ENCODE measurements at regions of chr9 and their contacts with region 1.

Region 1: GRCh38 chr9:22158927-22159346 is 149.8 kb upstream of the CDKN2B start:
- DNase-seq: peak; percentile 61
- H3K4me3 Mint-ChIP-seq: no peak overlapping the region
- H3K27ac Mint-ChIP-seq: peak overlapping the region; percentile 86
- H3K4me1 Mint-ChIP-seq: peaks cover 31% of the 10 kb centered on the region
- H3K27me3 Mint-ChIP-seq: no peaks in the 10 kb centered on the region
- CTCF ChIP-seq: no peak

Region 2: GRCh38 chr9:22211593-22212360 is 52.8 kb after region 1 on chr9:
- CTCF ChIA-PET with region 1: interaction called, 4 read pairs
- intact Hi-C with region 1: loop called (anchors 5 kb)
- DNase-seq: peak; percentile 54
- H3K4me3 Mint-ChIP-seq: no peak overlapping the region
- H3K27ac Mint-ChIP-seq: peak overlapping the region; percentile 90
- H3K4me1 Mint-ChIP-seq: peaks cover 37% of the 10 kb centered on the region
- H3K27me3 Mint-ChIP-seq: no peaks in the 10 kb centered on the region
- CTCF ChIP-seq: no peak

Region 3: DNA sequence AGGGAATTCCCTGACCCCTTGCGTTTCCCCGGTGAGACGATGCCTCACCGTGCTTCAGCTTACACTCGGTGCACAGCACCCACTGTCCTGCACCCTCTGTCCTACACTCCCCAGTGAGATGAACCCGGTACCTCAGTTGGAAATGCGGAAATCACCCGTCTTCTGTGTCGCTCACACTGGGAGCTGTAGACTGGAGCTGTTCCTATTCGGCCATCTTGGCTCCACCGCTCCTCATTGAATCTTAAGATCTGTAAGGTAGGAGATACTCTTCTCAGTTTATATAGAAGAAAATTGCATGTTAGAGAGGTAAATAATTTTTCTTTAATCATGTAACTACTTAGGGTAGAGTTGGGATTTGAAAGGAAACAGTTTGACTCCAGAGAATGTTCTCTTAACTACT is 349.9 kb after region 1 on chr9:
- CTCF ChIA-PET with region 1: no interaction called
- intact Hi-C with region 1: no loop called
- DNase-seq: no peak
- H3K4me3 Mint-ChIP-seq: no peak overlapping the region
- H3K27ac Mint-ChIP-seq: no peak overlapping the region
- H3K4me1 Mint-ChIP-seq: no peaks in the 10 kb centered on the region
- H3K27me3 Mint-ChIP-seq: peaks cover 21% of the 10 kb centered on the region
- CTCF ChIP-seq: no peak